Endothelial cell of umbilical vein (primary cell): ENCODE measurements at regions of chrX and their contacts with region 1.

Region 1: GRCh38 chrX:25523574-25524540 is 508.1 kb upstream of the ARX start:
- DNase-seq: peak; percentile 90
- H3K4me3 ChIP-seq: peak overlapping the region in 2 of 3 experiments; percentile 13 to 43
- H3K27ac ChIP-seq: peak overlapping the region; percentile 90
- H3K4me1 ChIP-seq: peaks cover 22% of the 10 kb centered on the region
- H3K27me3 ChIP-seq: no peaks in the 10 kb centered on the region
- CTCF ChIP-seq: peak; percentile 30 to 35
- POLR2A ChIP-seq: no peak

Region 2: DNA sequence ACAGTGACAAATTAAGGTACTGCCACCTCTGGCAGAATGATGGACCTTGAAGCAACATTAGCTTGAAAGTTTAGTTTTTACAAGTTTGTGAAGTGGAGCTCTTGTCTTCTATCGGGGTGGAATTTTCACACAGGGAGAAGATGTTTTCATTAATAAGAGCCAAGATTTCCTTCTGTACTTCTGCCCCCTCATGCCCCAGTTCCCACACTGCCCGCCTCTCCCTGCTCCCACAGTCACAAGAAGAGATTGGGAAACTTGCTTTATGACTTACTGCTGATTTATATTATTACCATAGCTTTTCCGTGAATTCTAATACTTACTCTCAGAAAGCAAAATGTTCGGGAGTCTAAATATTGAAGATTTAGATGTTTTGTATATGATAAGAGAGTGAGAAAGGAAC is 31.7 kb after region 1 on chrX:
- CTCF ChIA-PET with region 1: no interaction called
- POLR2A ChIA-PET with region 1: no interaction called
- dilution Hi-C with region 1: no loop called
- intact Hi-C with region 1: no loop called
- DNase-seq: no peak
- H3K4me3 ChIP-seq: no peak overlapping the region
- H3K27ac ChIP-seq: no peak overlapping the region
- H3K4me1 ChIP-seq: no peaks in the 10 kb centered on the region
- H3K27me3 ChIP-seq: no peaks in the 10 kb centered on the region
- CTCF ChIP-seq: no peak
- POLR2A ChIP-seq: no peak

Region 3: GRCh38 chrX:25721564-25721963 is 197.7 kb after region 1 on chrX:
- CTCF ChIA-PET with region 1: interaction called, 3 read pairs
- POLR2A ChIA-PET with region 1: no interaction called
- dilution Hi-C with region 1: no loop called
- intact Hi-C with region 1: loop called (anchors 1 kb)
- DNase-seq: peak; percentile 40
- H3K4me3 ChIP-seq: no peak overlapping the region
- H3K27ac ChIP-seq: no peak overlapping the region
- H3K4me1 ChIP-seq: no peaks in the 10 kb centered on the region
- H3K27me3 ChIP-seq: no peaks in the 10 kb centered on the region
- CTCF ChIP-seq: peak; percentile 12 to 23
- POLR2A ChIP-seq: no peak

Region 4: DNA sequence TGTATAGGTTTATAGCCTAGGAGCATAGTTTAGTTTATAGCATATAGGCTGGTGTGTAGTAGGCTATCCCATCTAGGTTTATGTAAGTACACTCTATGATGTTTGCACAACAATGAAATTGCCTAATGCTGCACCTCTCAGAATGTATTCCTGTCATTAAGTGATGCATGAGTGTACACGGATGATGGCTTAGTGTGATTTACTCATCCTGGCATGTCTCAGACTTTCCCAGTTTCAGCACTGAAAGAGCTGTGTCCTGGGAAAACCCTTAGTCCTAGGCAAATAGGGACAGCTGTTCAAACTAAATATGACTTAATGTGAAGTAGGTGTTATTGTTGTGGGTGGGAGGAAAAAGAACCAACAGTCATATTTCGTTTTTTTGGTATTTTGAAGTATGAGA is 349.3 kb after region 1 on chrX:
- CTCF ChIA-PET with region 1: interaction called, 4 read pairs
- POLR2A ChIA-PET with region 1: no interaction called
- dilution Hi-C with region 1: no loop called
- intact Hi-C with region 1: loop called (anchors 5 kb)
- DNase-seq: peak; percentile 30
- H3K4me3 ChIP-seq: no peak overlapping the region
- H3K27ac ChIP-seq: peak overlapping the region; percentile 7
- H3K4me1 ChIP-seq: peaks cover 25% of the 10 kb centered on the region
- H3K27me3 ChIP-seq: no peaks in the 10 kb centered on the region
- CTCF ChIP-seq: no peak
- POLR2A ChIP-seq: no peak

Region 5: DNA sequence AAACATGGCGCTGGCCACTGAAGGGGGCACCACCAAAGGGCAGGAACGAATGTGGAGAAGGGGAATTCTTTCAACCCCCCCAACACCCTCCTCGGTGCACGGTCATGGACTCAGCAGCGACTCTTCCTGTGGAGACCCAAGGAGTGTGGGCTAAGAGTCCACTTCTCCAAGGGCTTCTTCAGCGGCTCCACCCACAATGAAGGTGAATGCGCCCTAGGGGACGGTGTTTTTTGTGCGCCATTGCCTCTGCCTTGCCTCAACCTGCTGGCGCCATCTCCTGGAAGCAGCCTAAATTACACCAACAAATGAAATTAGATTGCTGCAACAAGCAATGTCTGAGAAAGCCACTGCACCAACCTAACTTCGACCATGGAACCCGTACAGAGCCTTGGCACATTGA is 445.1 kb after region 1 on chrX:
- CTCF ChIA-PET with region 1: interaction called, 16 read pairs
- POLR2A ChIA-PET with region 1: no interaction called
- dilution Hi-C with region 1: no loop called
- intact Hi-C with region 1: loop called (anchors 1 kb)
- DNase-seq: peak; percentile 33
- H3K4me3 ChIP-seq: no peak overlapping the region
- H3K27ac ChIP-seq: no peak overlapping the region
- H3K4me1 ChIP-seq: no peaks in the 10 kb centered on the region
- H3K27me3 ChIP-seq: no peaks in the 10 kb centered on the region
- CTCF ChIP-seq: peak; percentile 49 to 53
- POLR2A ChIP-seq: no peak

Region 6: DNA sequence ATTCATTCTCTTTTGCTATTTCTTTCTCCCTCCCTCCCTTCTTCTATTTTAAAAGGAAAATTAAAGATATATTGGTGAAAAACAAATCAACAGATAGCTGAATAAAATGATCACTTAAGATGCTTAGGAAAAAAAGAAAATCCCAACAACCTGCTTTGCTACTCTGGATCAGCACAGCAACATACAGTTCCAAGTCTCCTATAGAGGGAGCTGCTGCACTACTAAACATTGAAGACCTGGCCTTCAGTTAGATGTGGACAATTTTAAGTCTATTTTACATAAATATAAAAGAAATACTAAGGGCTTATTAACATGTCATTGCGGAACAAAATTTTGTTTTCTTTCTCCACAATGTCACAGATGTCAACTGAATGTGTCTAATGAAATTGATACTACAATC is 918.5 kb after region 1 on chrX:
- CTCF ChIA-PET with region 1: interaction called, 3 read pairs
- POLR2A ChIA-PET with region 1: no interaction called
- dilution Hi-C with region 1: no loop called
- intact Hi-C with region 1: loop called (anchors 5 kb)
- DNase-seq: peak; percentile 68
- H3K4me3 ChIP-seq: no peak overlapping the region
- H3K27ac ChIP-seq: no peak overlapping the region
- H3K4me1 ChIP-seq: no peaks in the 10 kb centered on the region
- H3K27me3 ChIP-seq: no peaks in the 10 kb centered on the region
- CTCF ChIP-seq: peak in 1 of 2 donors; percentile 39
- POLR2A ChIP-seq: no peak

Region 7: GRCh38 chrX:26918633-26919032 is 1394.8 kb after region 1 on chrX:
- CTCF ChIA-PET with region 1: no interaction called
- POLR2A ChIA-PET with region 1: no interaction called
- dilution Hi-C with region 1: no loop called
- intact Hi-C with region 1: loop called (anchors 5 kb)
- DNase-seq: peak; percentile 31
- H3K4me3 ChIP-seq: no peak overlapping the region
- H3K27ac ChIP-seq: no peak overlapping the region
- H3K4me1 ChIP-seq: peaks cover 36% of the 10 kb centered on the region
- H3K27me3 ChIP-seq: no peaks in the 10 kb centered on the region
- CTCF ChIP-seq: peak; percentile 17 to 26
- POLR2A ChIP-seq: no peak